ENCODE measurements at regions of chr2 and their contacts with region 1.

Region 1: GRCh38 chr2:25252281-25253105 is 84.1 kb upstream of the POMC start:
- DNase-seq: peak; percentile 36 to 67 (median 56)
- ATAC-seq: peak; percentile 77
- H3K4me3 ChIP-seq: peak overlapping the region; percentile 53
- H3K4me3 Mint-ChIP-seq: peak overlapping the region; percentile 82 to 91 (median 90)
- H3K27ac ChIP-seq: peak overlapping the region; percentile 87
- H3K27ac Mint-ChIP-seq: peak overlapping the region; percentile 70 to 93 (median 85)
- H3K4me1 ChIP-seq: peaks cover 6 to 22% of the 10 kb centered on the region in 2 donors
- H3K4me1 Mint-ChIP-seq: peaks cover 26 to 55% (median 45%) of the 10 kb centered on the region in 7 donors
- H3K27me3 ChIP-seq: no peaks in the 10 kb centered on the region
- H3K27me3 Mint-ChIP-seq: no peaks in the 10 kb centered on the region

Region 2: GRCh38 chr2:25215948-25216679 is 36.4 kb before region 1 on chr2:
- CTCF ChIA-PET with region 1: no interaction called
- POLR2A ChIA-PET with region 1: interaction called, 6 read pairs
- intact Hi-C with region 1: loop called in 1 of 2 experiments (anchors 1 kb)
- DNase-seq: peak; percentile 73 to 88 (median 85)
- ATAC-seq: peak; percentile 96
- H3K4me3 ChIP-seq: peak overlapping the region; percentile 61
- H3K4me3 Mint-ChIP-seq: peak overlapping the region; percentile 71 to 88 (median 78)
- H3K27ac ChIP-seq: peak overlapping the region; percentile 74
- H3K27ac Mint-ChIP-seq: peak overlapping the region; percentile 64 to 94 (median 89)
- H3K4me1 ChIP-seq: peaks cover 0 to 6% of the 10 kb centered on the region in 2 donors
- H3K4me1 Mint-ChIP-seq: peaks cover 9 to 33% (median 18%) of the 10 kb centered on the region in 7 donors
- H3K27me3 ChIP-seq: no peaks in the 10 kb centered on the region
- H3K27me3 Mint-ChIP-seq: no peaks in the 10 kb centered on the region

Region 3: DNA sequence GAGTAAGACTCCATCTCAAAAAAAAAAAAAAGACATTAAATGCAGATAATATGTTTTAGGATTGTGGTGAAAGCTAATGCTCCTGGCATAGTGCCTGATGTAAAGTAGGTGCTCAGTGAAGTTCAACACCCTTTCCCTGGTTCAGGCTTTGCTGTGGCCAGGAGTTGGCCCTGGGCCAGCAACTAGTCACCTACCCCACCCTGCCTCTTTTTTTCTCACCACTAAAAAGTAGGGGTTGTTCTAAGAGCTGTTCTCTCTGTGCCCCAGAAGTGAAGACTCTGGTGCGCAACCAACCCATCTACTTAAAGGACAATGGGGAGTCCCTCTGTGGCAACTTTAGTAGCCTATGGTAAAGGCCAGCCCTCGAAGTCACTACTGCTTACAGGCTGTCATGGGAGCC is 13.3 kb after region 1 on chr2:
- CTCF ChIA-PET with region 1: interaction called, 3 read pairs
- POLR2A ChIA-PET with region 1: interaction called, 106 read pairs
- intact Hi-C with region 1: no loop called
- DNase-seq: peak in 3 of 9 donors; percentile 31 to 56 (median 42)
- ATAC-seq: peak; percentile 67
- H3K4me3 ChIP-seq: no peak overlapping the region
- H3K4me3 Mint-ChIP-seq: peak overlapping the region in 7 of 10 donors; percentile 14 to 58 (median 38)
- H3K27ac ChIP-seq: peak overlapping the region; percentile 60
- H3K27ac Mint-ChIP-seq: peak overlapping the region in 7 of 9 donors; percentile 64 to 90 (median 83)
- H3K4me1 ChIP-seq: peaks cover 14 to 30% of the 10 kb centered on the region in 2 donors
- H3K4me1 Mint-ChIP-seq: peaks cover 26 to 69% (median 60%) of the 10 kb centered on the region in 7 donors
- H3K27me3 ChIP-seq: no peaks in the 10 kb centered on the region
- H3K27me3 Mint-ChIP-seq: no peaks in the 10 kb centered on the region

Region 4: GRCh38 chr2:25286025-25286400 is 33.5 kb after region 1 on chr2:
- CTCF ChIA-PET with region 1: interaction called, 4 read pairs
- POLR2A ChIA-PET with region 1: interaction called, 29 read pairs
- intact Hi-C with region 1: no loop called
- DNase-seq: peak; percentile 33 to 83 (median 77)
- ATAC-seq: peak; percentile 99
- H3K4me3 ChIP-seq: peak overlapping the region; percentile 42
- H3K4me3 Mint-ChIP-seq: peak overlapping the region; percentile 72 to 90 (median 79)
- H3K27ac ChIP-seq: peak overlapping the region; percentile 75
- H3K27ac Mint-ChIP-seq: peak overlapping the region; percentile 98 to 100 (median 99)
- H3K4me1 ChIP-seq: peaks cover 31 to 54% of the 10 kb centered on the region in 2 donors
- H3K4me1 Mint-ChIP-seq: peaks cover 29 to 83% (median 62%) of the 10 kb centered on the region in 7 donors
- H3K27me3 ChIP-seq: no peaks in the 10 kb centered on the region
- H3K27me3 Mint-ChIP-seq: no peaks in the 10 kb centered on the region

Region 5: GRCh38 chr2:25294573-25295462 is 42.3 kb after region 1 on chr2:
- CTCF ChIA-PET with region 1: no interaction called
- POLR2A ChIA-PET with region 1: interaction called, 25 read pairs
- intact Hi-C with region 1: loop called in 1 of 2 experiments (anchors 1 kb)
- DNase-seq: peak; percentile 51 to 79 (median 73)
- ATAC-seq: peak; percentile 89
- H3K4me3 ChIP-seq: peak overlapping the region; percentile 46
- H3K4me3 Mint-ChIP-seq: peak overlapping the region; percentile 72 to 85 (median 82)
- H3K27ac ChIP-seq: peak overlapping the region; percentile 81
- H3K27ac Mint-ChIP-seq: peak overlapping the region; percentile 90 to 99 (median 97)
- H3K4me1 ChIP-seq: peaks cover 31 to 61% of the 10 kb centered on the region in 2 donors
- H3K4me1 Mint-ChIP-seq: peaks cover 39 to 75% (median 55%) of the 10 kb centered on the region in 7 donors
- H3K27me3 ChIP-seq: no peaks in the 10 kb centered on the region
- H3K27me3 Mint-ChIP-seq: no peaks in the 10 kb centered on the region

Region 6: DNA sequence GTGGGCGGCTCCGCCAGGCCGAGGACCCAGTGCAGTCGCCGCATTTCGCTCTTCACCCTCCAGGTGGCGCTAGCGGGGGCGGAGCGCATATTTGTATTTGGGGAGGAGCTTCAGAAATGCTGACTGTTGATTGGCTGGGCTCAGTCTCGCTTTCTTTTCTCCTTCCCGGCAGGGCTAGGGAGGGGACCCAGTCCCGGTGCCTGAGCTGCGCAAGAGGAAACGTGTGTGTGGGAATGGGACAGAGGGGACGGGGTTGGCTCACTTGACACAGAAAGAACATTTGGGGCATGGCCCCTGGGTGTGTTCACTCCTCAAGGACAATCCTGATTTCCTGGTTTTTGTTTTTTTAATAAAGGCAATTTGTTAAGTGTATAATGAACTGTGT is 109.5 kb after region 1 on chr2:
- CTCF ChIA-PET with region 1: interaction called, 9 read pairs
- POLR2A ChIA-PET with region 1: interaction called, 5 read pairs
- intact Hi-C with region 1: loop called in 1 of 2 experiments (anchors 1 kb)
- DNase-seq: peak; percentile 86 to 99 (median 93)
- ATAC-seq: peak; percentile 98
- H3K4me3 ChIP-seq: peak overlapping the region; percentile 78
- H3K4me3 Mint-ChIP-seq: peak overlapping the region; percentile 83 to 95 (median 89)
- H3K27ac ChIP-seq: peak overlapping the region; percentile 81
- H3K27ac Mint-ChIP-seq: peak overlapping the region; percentile 84 to 96 (median 92)
- H3K4me1 ChIP-seq: peaks cover 3 to 4% of the 10 kb centered on the region in 2 donors
- H3K4me1 Mint-ChIP-seq: peaks cover 11 to 32% (median 25%) of the 10 kb centered on the region in 7 donors
- H3K27me3 ChIP-seq: no peaks in the 10 kb centered on the region
- H3K27me3 Mint-ChIP-seq: no peaks in the 10 kb centered on the region

Measured in naive thymus-derived CD4-positive, alpha-beta T cell (primary cell).